Pancreas (tissue), 10 donors: ENCODE measurements at regions of chr3 and their contacts with region 1.

Region 1: DNA sequence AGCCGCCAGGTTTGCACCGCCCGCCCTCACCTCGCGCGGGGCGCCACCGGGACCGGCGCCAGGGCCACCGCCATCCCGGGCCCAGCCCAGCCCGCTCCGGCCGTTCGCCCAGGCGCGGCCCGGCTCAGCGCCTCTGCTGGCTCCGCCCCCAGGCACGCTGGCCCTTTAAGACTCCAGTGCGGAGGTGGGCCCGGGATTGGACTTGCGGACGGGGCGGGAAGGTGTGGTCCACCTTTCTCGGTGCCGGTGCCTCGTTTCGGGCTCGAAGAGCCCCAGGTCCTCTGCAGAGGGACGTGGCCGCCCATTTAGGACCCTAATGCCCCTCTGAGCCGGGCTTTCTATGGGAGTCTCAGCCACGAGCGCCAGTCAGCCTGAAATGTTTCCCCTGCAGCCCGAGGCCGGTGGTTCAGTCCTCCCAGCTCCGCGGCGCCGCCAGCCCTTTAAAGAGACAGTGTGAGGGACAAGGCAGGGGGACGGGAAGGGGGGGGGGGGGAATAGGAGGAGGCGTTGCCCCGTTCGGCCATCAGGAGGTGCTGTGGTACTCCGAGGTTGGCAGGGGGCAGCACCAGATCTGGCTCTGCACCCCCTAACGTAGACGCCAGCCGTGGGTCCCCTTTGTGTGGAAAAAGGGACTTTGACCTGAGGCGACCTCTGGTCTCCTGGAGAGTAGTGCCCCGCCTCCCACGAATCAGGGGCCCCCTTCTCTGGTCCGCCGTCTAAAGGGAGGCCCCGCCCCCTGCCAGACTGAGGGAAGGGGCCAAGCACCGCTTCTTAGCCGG is 1.0 kb downstream of the HYAL2 start:
- DNase-seq: peak; percentile 87 to 95 (median 92)
- ATAC-seq: peak; percentile 88 to 91 (median 89)
- H3K4me3 ChIP-seq: peak overlapping the region; percentile 51 to 94 (median 81)
- H3K27ac ChIP-seq: peak overlapping the region; percentile 88 to 98 (median 96)
- H3K4me1 ChIP-seq: peaks cover 5 to 22% (median 21%) of the 10 kb centered on the region in 3 donors
- H3K27me3 ChIP-seq: no peaks in the 10 kb centered on the region
- CTCF ChIP-seq: peak in 3 of 4 donors; percentile 15 to 24 (median 21)

Region 2: DNA sequence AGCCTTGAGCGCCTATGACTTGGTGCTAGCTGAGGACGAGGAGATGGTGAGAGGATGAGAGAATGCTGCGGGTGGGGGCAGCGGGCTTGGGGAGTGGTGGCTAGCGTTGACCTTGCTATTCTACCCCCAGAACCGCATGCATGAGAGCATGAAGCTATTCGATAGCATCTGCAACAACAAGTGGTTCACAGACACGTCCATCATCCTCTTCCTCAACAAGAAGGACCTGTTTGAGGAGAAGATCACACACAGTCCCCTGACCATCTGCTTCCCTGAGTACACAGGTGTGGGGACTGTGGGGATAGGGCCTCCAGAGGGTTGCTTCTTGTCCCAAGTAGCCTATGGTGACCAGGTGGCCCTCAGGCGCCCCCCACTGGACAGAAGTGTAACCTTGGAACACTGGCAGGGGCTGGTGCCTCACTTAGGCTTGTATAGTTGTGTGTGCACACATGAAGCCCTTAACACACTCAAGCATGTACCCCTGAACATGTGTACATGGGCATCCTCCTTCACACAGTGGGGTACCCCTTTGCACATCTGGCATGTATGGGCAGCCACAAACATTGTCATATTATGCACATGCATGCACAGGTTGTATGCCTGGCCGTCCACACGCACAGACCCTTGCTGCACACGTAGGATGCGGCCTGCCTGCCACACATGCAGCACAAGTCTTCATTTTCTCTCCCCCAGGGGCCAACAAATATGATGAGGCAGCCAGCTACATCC is 64.6 kb before region 1 on chr3:
- intact Hi-C with region 1: loop called in 1 of 3 experiments (anchors 10 kb)
- DNase-seq: peak in 3 of 6 donors; percentile 55 to 77 (median 72)
- ATAC-seq: no peak
- H3K4me3 ChIP-seq: no peak overlapping the region
- H3K27ac ChIP-seq: no peak overlapping the region
- H3K4me1 ChIP-seq: peaks cover 0 to 16% (median 6%) of the 10 kb centered on the region in 3 donors
- H3K27me3 ChIP-seq: no peaks in the 10 kb centered on the region
- CTCF ChIP-seq: peak in 3 of 4 donors; percentile 10 to 39 (median 38)